Activated naive CD4-positive, alpha-beta T cell treated with anti-CD3 and anti-CD28 coated beads for 36 hours (primary cell): ENCODE measurements at regions of chr7 and their contacts with region 1.

Region 1: GRCh38 chr7:92768501-92769393 is 67.6 kb downstream of the CDK6 start:
- DNase-seq: peak; percentile 76
- H3K4me3 Mint-ChIP-seq: peak overlapping the region; percentile 48
- H3K27ac Mint-ChIP-seq: peak overlapping the region; percentile 92
- H3K4me1 Mint-ChIP-seq: peaks cover 70% of the 10 kb centered on the region
- H3K27me3 Mint-ChIP-seq: no peaks in the 10 kb centered on the region

Region 2: DNA sequence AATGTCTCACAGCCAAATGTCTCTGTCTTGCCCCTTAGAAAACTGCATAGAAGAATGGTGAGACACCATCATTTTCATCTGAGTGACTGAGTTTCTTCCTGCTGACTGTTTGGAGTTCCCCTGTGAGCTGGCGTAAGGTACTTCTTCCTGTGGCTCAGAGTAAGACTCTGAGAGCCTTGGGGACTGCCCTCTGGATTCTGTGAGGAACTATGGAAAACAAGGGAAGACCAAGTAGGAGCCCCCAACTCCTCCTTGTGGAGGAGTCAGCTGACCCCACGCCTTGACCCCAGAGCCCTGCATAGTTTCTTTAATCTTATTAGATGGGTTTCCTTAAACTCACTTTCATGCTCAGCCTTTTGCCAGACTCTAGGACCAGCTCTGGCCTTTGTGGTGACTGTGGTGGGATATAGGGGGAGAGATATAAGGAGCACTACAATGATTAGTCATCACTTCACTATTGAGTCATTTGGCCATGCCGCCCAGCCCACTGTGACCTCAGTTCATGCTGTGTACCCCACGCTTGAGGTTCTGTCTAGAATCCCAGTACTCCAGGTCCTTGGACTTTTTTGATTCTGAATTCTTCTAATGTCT is 126.7 kb before region 1 on chr7:
- CTCF ChIA-PET with region 1: no interaction called
- intact Hi-C with region 1: loop called (anchors 2 kb)
- DNase-seq: peak; percentile 71
- H3K4me3 Mint-ChIP-seq: peak overlapping the region; percentile 33
- H3K27ac Mint-ChIP-seq: peak overlapping the region; percentile 97
- H3K4me1 Mint-ChIP-seq: peaks cover 89% of the 10 kb centered on the region
- H3K27me3 Mint-ChIP-seq: no peaks in the 10 kb centered on the region

Region 3: GRCh38 chr7:92691578-92691977 is 77.2 kb before region 1 on chr7:
- CTCF ChIA-PET with region 1: interaction called, 5 read pairs
- intact Hi-C with region 1: loop called (anchors 2 kb)
- DNase-seq: peak; percentile 46
- H3K4me3 Mint-ChIP-seq: no peak overlapping the region
- H3K27ac Mint-ChIP-seq: peak overlapping the region; percentile 87
- H3K4me1 Mint-ChIP-seq: peaks cover 70% of the 10 kb centered on the region
- H3K27me3 Mint-ChIP-seq: no peaks in the 10 kb centered on the region

Region 4: DNA sequence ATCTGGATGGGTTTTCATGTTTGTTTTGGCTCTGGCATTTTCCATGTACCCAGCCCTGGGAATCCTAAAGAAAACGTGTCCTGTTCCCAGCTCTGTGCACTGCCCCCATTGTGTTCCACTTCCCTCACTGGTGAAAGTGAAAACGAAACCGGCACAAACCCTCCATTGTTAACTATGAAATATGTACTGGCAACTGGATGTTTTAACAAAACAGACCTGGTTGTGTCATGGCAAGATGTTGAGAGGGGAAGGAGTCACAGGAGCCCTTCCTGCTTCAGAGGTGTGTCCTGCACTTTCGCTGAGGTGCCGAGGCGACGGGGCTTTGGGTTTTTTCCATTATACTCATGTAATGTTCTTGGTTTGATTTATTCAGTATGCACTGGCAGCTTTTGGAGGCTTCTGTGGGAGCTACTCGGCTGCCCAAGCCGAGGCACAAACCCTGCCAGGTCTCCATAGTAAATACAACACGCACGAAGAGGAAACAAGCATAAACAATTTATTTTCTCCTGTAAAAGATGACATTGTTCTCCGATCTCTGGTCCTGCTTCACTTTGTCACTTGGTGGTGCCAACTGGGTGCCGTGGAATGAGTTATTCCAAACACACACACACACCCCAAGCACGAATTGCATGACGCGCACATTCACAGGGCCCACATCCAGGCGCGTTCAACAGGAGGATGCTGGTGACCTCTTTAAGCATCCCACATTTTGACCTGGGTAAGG is 50.6 kb before region 1 on chr7:
- CTCF ChIA-PET with region 1: interaction called, 3 read pairs
- intact Hi-C with region 1: loop called (anchors 1 kb)
- DNase-seq: peak; percentile 82
- H3K4me3 Mint-ChIP-seq: peak overlapping the region; percentile 79
- H3K27ac Mint-ChIP-seq: peak overlapping the region; percentile 93
- H3K4me1 Mint-ChIP-seq: peaks cover 74% of the 10 kb centered on the region
- H3K27me3 Mint-ChIP-seq: no peaks in the 10 kb centered on the region

Region 5: DNA sequence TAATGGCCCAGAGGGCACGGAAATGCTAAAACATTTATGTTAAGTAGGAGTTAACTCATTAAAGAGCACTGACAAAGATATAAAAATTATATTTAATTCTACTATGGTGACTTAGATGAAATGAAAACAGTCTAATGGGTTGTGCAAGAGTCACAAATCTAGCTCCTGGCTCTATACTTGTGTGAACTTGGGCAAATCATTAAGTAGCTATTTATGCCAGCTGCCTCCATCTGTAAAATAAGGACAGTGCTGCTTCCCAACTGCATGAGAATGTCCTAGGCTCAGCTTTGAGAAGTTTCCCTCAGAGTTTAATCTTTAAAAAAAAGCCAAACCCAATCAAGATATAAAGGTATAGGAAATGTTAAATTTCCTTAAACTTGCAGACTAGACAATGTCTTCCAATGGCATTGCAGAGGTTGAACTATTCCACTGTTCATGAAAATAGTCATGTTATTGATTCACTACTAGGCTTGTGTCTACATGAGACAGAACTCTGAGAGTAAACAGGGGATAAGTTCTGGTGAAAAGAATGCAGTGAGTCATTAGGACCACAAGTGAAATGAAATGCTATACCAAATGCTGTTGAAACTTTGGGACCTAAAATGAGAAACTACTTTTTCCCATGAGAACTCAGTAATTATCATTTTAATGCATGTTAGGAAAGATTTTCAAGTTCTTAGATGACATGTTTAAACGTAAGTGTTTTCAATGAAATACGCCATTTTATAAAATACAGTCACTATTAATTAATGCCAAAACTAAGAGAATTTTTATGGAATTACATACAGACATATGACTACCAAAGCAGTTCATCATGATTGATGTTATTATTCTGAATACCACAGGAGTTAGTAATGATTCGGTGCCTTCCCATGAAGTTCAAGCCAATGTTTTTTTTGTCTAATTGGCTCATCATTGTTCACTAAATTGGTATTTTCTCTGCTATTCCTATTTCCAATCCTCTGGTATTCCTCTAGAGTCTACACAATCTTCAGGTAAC is 16.5 kb before region 1 on chr7:
- CTCF ChIA-PET with region 1: interaction called, 3 read pairs
- intact Hi-C with region 1: loop called (anchors 2 kb)
- DNase-seq: no peak
- H3K4me3 Mint-ChIP-seq: no peak overlapping the region
- H3K27ac Mint-ChIP-seq: no peak overlapping the region
- H3K4me1 Mint-ChIP-seq: peaks cover 68% of the 10 kb centered on the region
- H3K27me3 Mint-ChIP-seq: no peaks in the 10 kb centered on the region